ENCODE measurements at regions of chr12 and their contacts with region 1.

Region 1: GRCh38 chr12:22740656-22741355 is 115.8 kb downstream of the ETNK1 start:
- DNase-seq: no peak
- H3K4me3 Mint-ChIP-seq: no peak overlapping the region
- H3K27ac Mint-ChIP-seq: no peak overlapping the region
- H3K4me1 Mint-ChIP-seq: no peaks in the 10 kb centered on the region
- H3K27me3 Mint-ChIP-seq: peaks cover 9% of the 10 kb centered on the region

Region 2: GRCh38 chr12:22821985-22822384 is 81.2 kb after region 1 on chr12:
- intact Hi-C with region 1: no loop called
- DNase-seq: no peak
- H3K4me3 Mint-ChIP-seq: no peak overlapping the region
- H3K27ac Mint-ChIP-seq: no peak overlapping the region
- H3K4me1 Mint-ChIP-seq: no peaks in the 10 kb centered on the region
- H3K27me3 Mint-ChIP-seq: no peaks in the 10 kb centered on the region

Region 3: GRCh38 chr12:22904485-22904884 is 163.7 kb after region 1 on chr12:
- intact Hi-C with region 1: no loop called
- DNase-seq: no peak
- H3K4me3 Mint-ChIP-seq: no peak overlapping the region
- H3K27ac Mint-ChIP-seq: no peak overlapping the region
- H3K4me1 Mint-ChIP-seq: no peaks in the 10 kb centered on the region
- H3K27me3 Mint-ChIP-seq: no peaks in the 10 kb centered on the region

Region 4: GRCh38 chr12:23193552-23193951 is 452.7 kb after region 1 on chr12:
- intact Hi-C with region 1: loop called (anchors 5 kb)
- DNase-seq: no peak
- H3K4me3 Mint-ChIP-seq: no peak overlapping the region
- H3K27ac Mint-ChIP-seq: no peak overlapping the region
- H3K4me1 Mint-ChIP-seq: no peaks in the 10 kb centered on the region
- H3K27me3 Mint-ChIP-seq: no peaks in the 10 kb centered on the region